A549 (cell line): ENCODE measurements at regions of chr19 and their contacts with region 1.

Region 1: GRCh38 chr19:13718733-13719132 is 45.6 kb upstream of the MRI1 start:
- DNase-seq: peak; percentile 21 to 65
- ATAC-seq: peak; percentile 74 to 85; a peak in 5 of 6 replicates
- H3K4me3 ChIP-seq: no peak overlapping the region
- H3K27ac ChIP-seq: no peak overlapping the region
- H3K4me1 ChIP-seq: no peaks in the 10 kb centered on the region
- CTCF ChIP-seq: peak; percentile 39
- EP300 ChIP-seq: no peak
- POLR2A ChIP-seq: no peak
- RAD21 ChIP-seq: peak; percentile 70

Region 2: DNA sequence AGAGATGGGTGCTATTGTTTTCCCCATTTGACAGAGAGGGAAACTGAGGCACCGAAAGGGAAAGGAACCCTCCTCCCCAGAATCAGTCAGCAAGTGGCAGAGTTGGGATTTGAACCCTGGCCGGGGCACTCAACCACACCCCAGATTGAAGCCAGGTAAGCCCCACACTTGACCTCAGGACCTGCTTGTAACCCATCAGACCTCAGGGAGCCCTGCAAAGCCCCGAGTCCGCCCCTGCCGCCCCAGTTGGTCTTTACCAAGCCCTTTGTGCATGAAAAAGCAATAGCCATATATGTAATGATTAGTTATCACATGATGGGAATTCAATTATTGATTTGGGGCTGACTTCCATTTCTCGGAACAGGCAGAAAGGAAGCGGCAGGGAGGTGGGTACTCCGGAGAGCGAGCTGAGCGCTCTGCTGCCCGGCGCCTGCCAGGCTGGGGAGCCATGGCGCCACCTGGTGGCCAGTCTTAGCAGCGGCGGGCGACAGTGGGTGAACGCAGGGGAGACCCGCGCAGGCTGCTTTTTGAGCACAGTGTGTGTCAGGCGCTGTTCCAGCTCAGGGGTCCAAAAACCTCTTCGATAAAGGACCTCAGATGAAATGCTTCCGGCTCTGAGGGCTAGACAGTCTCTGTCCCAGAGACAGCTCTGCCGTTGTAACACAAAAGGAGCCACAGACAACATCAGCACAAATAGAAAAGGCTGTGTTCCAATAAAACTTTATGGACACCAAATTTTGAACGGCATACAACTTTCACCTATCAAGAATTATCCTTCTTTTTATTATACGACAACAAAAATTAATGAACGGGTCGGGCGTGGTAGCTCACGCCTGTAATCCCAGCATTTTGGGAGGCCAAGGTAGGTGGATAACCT is 129.5 kb before region 1 on chr19:
- CTCF ChIA-PET with region 1: interaction called, 69 read pairs
- POLR2A ChIA-PET with region 1: no interaction called
- DNase-seq: peak; percentile 40 to 65
- ATAC-seq: peak; percentile 98 to 99
- H3K4me3 ChIP-seq: no peak overlapping the region
- H3K27ac ChIP-seq: no peak overlapping the region
- H3K4me1 ChIP-seq: no peaks in the 10 kb centered on the region
- CTCF ChIP-seq: peak; percentile 85
- EP300 ChIP-seq: no peak
- POLR2A ChIP-seq: no peak
- RAD21 ChIP-seq: peak; percentile 60 to 73; a peak in 4 of 5 replicates

Region 3: DNA sequence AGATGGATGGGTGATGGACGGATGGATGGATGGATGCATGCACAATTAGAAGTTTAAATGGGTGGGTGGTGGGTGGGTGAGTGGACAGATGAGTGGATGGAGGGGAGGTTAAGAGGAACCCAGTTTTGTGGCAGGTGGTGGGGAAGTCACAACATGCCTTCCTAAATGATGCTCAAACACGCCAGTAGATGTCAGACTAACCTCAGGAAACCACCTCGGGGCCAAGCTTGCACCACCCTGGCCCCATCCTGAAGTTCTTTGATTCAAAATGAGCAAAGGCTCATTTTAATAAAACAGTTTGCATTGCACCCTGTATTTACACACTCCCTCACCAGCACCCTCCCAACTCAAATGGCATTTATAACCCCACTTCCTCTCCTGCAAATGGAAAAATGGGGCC is 121.1 kb before region 1 on chr19:
- CTCF ChIA-PET with region 1: interaction called, 69 read pairs
- POLR2A ChIA-PET with region 1: no interaction called
- DNase-seq: peak; percentile 60 to 71
- ATAC-seq: peak; percentile 82 to 89; a peak in 5 of 6 replicates
- H3K4me3 ChIP-seq: no peak overlapping the region
- H3K27ac ChIP-seq: no peak overlapping the region
- H3K4me1 ChIP-seq: no peaks in the 10 kb centered on the region
- CTCF ChIP-seq: peak; percentile 63
- EP300 ChIP-seq: no peak
- POLR2A ChIP-seq: no peak
- RAD21 ChIP-seq: peak; percentile 88 to 92

Region 4: DNA sequence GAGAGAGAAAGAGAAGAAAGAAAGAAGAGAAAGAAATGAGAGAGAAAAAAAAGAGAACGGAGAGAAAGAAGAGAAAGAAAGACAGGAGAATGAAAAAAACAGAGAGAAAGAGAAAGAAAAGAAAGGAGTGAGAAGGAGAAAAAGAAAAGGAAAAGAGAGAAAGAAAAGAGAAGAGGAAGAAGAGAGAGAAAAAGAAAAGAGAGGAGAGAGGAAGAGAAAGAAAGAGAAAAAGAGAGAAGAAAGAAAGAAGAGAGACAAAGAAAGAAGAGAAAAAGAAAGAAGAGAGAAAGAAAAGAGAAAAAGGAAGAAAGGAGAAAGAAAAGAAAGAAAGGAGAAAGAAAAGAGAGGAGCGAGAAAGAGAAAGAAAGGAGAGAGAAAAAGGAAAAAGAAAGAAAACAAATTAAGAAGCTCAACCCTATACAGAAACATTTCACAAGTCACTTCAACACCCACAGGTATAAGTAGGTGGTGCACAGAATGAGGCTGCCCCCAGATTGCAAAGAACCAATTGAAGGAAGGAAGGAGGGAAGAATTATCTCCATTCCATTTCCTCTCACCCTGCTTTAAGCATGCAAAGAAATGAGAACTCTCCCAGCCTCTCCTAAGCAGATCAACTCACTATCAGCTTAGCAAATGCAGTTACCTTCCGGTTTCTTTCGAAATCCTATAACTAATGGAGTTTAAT is 113.7 kb before region 1 on chr19:
- CTCF ChIA-PET with region 1: interaction called, 69 read pairs
- POLR2A ChIA-PET with region 1: no interaction called
- DNase-seq: no peak
- ATAC-seq: no peak
- H3K4me3 ChIP-seq: no peak overlapping the region
- H3K27ac ChIP-seq: no peak overlapping the region
- H3K4me1 ChIP-seq: peaks cover 4% of the 10 kb centered on the region; the same call in 2 of the 3 replicates
- CTCF ChIP-seq: no peak
- EP300 ChIP-seq: no peak
- POLR2A ChIP-seq: no peak
- RAD21 ChIP-seq: no peak

Region 5: GRCh38 chr19:13610039-13610691 is 108.6 kb before region 1 on chr19:
- CTCF ChIA-PET with region 1: interaction called, 11 read pairs
- POLR2A ChIA-PET with region 1: no interaction called
- DNase-seq: peak in 1 of 2 experiments; percentile 17
- ATAC-seq: peak; percentile 33 to 39; a peak in 3 of 6 replicates
- H3K4me3 ChIP-seq: no peak overlapping the region
- H3K27ac ChIP-seq: no peak overlapping the region
- H3K4me1 ChIP-seq: peaks cover 7% of the 10 kb centered on the region; the same call in 2 of the 3 replicates
- CTCF ChIP-seq: no peak
- EP300 ChIP-seq: no peak
- POLR2A ChIP-seq: no peak
- RAD21 ChIP-seq: peak in 1 of 2 experiments; percentile 37; a peak in 2 of 5 replicates